GM10248 (cell line): ENCODE measurements at regions of chr2 and their contacts with region 1.

Region 1: DNA sequence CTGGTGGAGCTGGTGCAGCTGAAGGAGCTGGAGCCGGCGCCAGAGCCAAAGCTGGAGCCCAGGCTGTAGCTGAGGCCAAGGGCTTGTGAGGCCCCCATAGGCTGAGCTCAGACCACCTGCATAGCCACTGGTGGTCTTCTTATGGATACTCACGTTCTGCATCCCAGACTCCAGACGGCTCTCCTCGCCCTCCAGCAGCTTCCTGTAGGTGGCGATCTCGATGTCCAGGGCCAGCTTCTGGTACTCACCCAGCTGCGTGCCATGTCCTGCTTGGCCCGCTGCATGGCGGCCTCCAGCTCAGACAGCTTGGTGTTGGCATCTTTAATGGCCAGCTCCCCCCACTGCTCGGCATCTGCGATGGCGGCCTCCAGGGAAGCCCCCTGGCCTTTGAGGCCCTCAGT is 6.0 kb upstream of the CDK5R2 start:
- DNase-seq: no peak
- CTCF ChIP-seq: peak; percentile 5

Region 2: GRCh38 chr2:219947575-219947974 is 994.1 kb after region 1 on chr2:
- CTCF ChIA-PET with region 1: no interaction called
- POLR2A ChIA-PET with region 1: interaction called, 10 read pairs
- DNase-seq: no peak
- CTCF ChIP-seq: no peak